Transverse colon (tissue), 4 donors: ENCODE measurements at regions of chr16 and their contacts with region 1.

Region 1: GRCh38 chr16:78770353-78771091 is 671.1 kb downstream of the WWOX start:
- DNase-seq: peak; percentile 85
- H3K4me3 ChIP-seq: no peak overlapping the region
- H3K27ac ChIP-seq: no peak overlapping the region
- H3K4me1 ChIP-seq: peaks cover 0 to 8% (median 5%) of the 10 kb centered on the region in 4 donors
- H3K27me3 ChIP-seq: no peaks in the 10 kb centered on the region
- CTCF ChIP-seq: peak; percentile 68 to 92 (median 81)
- EP300 ChIP-seq: no peak
- POLR2A ChIP-seq: no peak

Region 2: DNA sequence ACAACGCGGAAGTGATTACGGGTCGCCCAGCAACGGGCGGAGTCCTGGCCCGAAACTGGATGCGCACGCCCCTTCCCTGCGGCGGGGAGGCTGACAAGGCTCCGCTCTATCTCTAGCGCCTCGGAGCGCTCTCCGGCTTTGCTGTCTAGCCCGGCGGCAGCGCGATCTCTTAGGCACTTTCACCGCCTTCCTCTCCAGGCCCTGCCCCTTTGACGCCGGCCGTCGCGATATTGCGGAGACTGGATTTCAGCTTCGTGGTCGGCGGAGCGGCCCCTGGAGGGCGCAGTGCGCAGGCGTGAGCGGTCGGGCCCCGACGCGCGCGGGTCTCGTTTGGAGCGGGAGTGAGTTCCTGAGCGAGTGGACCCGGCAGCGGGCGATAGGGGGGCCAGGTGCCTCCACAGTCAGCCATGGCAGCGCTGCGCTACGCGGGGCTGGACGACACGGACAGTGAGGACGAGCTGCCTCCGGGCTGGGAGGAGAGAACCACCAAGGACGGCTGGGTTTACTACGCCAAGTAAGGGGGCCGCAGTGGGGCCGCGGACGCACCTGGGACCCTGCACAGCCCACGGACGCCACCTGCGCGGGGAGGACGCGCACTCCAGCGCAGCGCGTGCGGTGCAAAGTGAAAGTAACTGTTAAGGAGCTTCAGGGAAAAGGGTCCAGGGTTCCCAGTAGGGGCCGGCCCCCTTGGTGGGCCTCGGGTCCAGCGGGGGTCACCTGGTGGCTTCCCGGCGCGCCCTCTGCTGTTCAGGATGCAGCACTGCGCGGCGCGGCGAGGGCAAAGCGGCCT is 671.0 kb before region 1 on chr16 and contains the start of gene WWOX:
- in situ Hi-C with region 1: loop called in 1 of 4 experiments (anchors 25 kb)
- intact Hi-C with region 1: no loop called
- DNase-seq: peak; percentile 98
- H3K4me3 ChIP-seq: peak within 1 kb of the TSS; percentile 62 to 91 (median 84)
- H3K27ac ChIP-seq: peak within 1 kb of the TSS; percentile 92 to 96 (median 94)
- H3K4me1 ChIP-seq: peaks cover 0 to 13% (median 5%) of the 10 kb centered on the region in 4 donors
- H3K27me3 ChIP-seq: peaks cover 3% of the 10 kb centered on the region
- CTCF ChIP-seq: peak; percentile 84 to 96 (median 91)
- EP300 ChIP-seq: no peak
- POLR2A ChIP-seq: peak; percentile 46
- total RNA-seq, gene WWOX: 11.2 to 53.8 (median 24.8) TPM

Region 3: DNA sequence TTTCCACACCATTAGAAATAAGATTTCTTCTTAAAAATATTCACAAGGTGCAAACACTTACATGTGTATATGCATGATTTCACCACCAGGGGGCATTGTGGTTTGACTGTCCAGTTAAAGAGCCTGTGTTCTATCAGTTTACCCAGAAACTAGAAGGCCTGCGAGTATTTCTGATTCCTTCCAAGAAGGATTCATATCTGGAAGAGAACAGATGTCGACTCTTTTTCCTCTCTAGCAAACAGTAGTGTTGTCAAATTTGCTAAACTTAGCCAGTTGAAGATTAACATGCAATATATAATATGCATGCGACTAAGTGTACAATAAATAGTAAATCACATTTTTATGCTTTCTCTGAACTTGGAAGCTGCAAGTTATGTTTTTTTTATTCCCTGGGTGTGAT is 266.9 kb before region 1 on chr16:
- in situ Hi-C with region 1: loop called in 3 of 4 experiments (anchors 10 to 25 kb)
- intact Hi-C with region 1: no loop called
- DNase-seq: peak; percentile 44
- H3K4me3 ChIP-seq: no peak overlapping the region
- H3K27ac ChIP-seq: peak overlapping the region in 1 of 4 donors; percentile 78
- H3K4me1 ChIP-seq: peaks cover 6 to 15% (median 8%) of the 10 kb centered on the region in 4 donors
- H3K27me3 ChIP-seq: no peaks in the 10 kb centered on the region
- CTCF ChIP-seq: peak; percentile 82 to 89 (median 86)
- EP300 ChIP-seq: no peak
- POLR2A ChIP-seq: no peak